ENCODE measurements at regions of chr13 and their contacts with region 1.

Region 1: DNA sequence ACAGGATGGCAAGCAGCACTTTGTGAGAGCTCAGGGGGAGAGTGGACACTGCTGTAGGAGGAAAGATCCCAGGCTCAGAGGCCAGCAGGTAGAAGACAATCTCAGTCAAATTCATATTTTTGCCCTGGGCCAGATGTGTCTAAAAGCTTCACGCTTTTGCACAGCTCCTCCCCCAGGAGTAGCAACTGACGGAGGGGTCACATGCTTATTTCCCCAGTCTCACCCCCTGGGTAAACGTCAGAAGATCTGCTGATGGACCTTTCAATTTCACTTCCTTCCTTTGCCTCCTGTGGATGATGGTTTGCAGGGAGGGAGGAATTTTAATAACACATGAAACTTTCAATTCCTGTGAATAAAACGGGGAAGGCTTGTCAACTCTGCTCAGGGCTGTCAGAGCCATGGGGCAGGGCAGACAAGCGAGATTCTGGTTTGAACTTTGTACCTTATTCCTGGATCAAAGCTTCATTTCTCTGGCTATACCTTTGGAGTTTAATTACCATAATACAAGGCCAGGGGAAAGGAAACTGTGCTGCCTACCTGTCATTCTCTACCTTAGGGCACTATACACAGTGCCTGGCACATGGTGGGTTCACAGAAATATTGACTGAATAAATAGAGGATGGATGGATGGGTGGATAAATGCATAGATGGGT is 41.0 kb downstream of the POU4F1 start:
- DNase-seq: no peak
- H3K4me3 ChIP-seq: no peak overlapping the region
- CTCF ChIP-seq: no peak

Region 2: GRCh38 chr13:78958006-78958405 is 395.6 kb after region 1 on chr13:
- in situ Hi-C with region 1: loop called (anchors 25 kb)
- DNase-seq: no peak
- H3K4me3 ChIP-seq: no peak overlapping the region
- CTCF ChIP-seq: no peak